Activated naive CD4-positive, alpha-beta T cell treated with anti-CD3 and anti-CD28 coated beads, Interleukin-2, amount 10 ng/mL, durations not matched to agents 7 days and 5 days (primary cell): ENCODE measurements at regions of chr22 and their contacts with region 1.

Region 1: GRCh38 chr22:41697126-41697775 is 2.1 kb upstream of the MEI1 start:
- DNase-seq: peak; percentile 95
- H3K4me3 Mint-ChIP-seq: peak overlapping the region; percentile 18
- H3K27ac Mint-ChIP-seq: peak overlapping the region; percentile 57
- H3K4me1 Mint-ChIP-seq: peaks cover 11% of the 10 kb centered on the region
- H3K27me3 Mint-ChIP-seq: peaks cover 18% of the 10 kb centered on the region

Region 2: GRCh38 chr22:41377846-41378245 is 319.4 kb before region 1 on chr22:
- CTCF ChIA-PET with region 1: no interaction called
- DNase-seq: no peak
- H3K4me3 Mint-ChIP-seq: no peak overlapping the region
- H3K27ac Mint-ChIP-seq: no peak overlapping the region
- H3K4me1 Mint-ChIP-seq: peaks cover 18% of the 10 kb centered on the region
- H3K27me3 Mint-ChIP-seq: peaks cover 27% of the 10 kb centered on the region

Region 3: GRCh38 chr22:41666661-41667258 is 30.5 kb before region 1 on chr22:
- CTCF ChIA-PET with region 1: interaction called, 17 read pairs
- DNase-seq: peak; percentile 94
- H3K4me3 Mint-ChIP-seq: peak overlapping the region; percentile 75
- H3K27ac Mint-ChIP-seq: peak overlapping the region; percentile 98
- H3K4me1 Mint-ChIP-seq: peaks cover 12% of the 10 kb centered on the region
- H3K27me3 Mint-ChIP-seq: no peaks in the 10 kb centered on the region

Region 4: DNA sequence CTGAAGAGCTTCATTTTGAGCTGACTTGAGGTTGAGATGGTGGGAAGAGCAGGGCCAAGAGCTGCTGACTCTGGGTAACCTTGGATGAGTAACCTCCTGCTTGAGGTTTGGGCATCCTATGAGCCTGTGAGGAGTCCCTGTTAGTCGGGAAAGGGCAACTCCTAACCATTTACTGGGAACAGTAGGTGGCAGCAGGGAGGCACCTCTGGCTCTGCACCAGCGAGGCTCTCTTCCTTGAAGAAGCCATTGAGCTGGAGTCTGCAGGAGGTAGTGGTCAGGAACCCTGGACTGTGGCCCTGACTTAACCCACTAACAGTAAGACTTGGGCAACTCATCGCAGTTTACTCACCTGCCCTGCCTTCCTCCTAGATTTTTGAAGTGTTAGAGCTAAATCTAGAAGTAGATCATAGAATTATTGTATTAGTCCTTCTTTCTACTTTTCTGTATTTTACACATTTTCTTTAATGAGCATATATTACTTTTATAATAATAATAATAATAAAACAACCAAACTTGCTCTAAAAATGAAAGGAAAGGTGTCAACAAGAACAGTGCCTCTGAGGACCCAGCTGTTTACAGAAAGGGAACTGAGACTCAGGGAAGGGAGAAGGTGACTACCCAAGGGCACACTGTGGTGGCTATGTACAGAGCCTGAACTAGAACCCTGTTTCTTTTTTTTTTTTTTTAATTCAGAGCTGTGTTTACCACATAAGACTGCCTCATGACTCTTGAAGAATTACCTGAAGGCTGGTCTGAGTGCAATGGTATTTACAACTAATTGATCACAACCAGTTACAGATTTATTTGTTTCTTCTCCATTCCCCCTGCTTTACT is 49.5 kb after region 1 on chr22:
- CTCF ChIA-PET with region 1: interaction called, 20 read pairs
- DNase-seq: peak; percentile 70
- H3K4me3 Mint-ChIP-seq: no peak overlapping the region
- H3K27ac Mint-ChIP-seq: no peak overlapping the region
- H3K4me1 Mint-ChIP-seq: peaks cover 2% of the 10 kb centered on the region
- H3K27me3 Mint-ChIP-seq: peaks cover 57% of the 10 kb centered on the region

Region 5: GRCh38 chr22:41800348-41801146 is 103.3 kb after region 1 on chr22 and contains the start of gene CCDC134:
- CTCF ChIA-PET with region 1: interaction called, 31 read pairs
- DNase-seq: peak; percentile 95
- H3K4me3 Mint-ChIP-seq: peak within 1 kb of the TSS; percentile 86
- H3K27ac Mint-ChIP-seq: peak within 1 kb of the TSS; percentile 97
- H3K4me1 Mint-ChIP-seq: peaks cover 48% of the 10 kb centered on the region
- H3K27me3 Mint-ChIP-seq: no peaks in the 10 kb centered on the region

Region 6: GRCh38 chr22:41857155-41857859 is 160.1 kb after region 1 on chr22:
- CTCF ChIA-PET with region 1: interaction called, 24 read pairs
- DNase-seq: peak; percentile 76
- H3K4me3 Mint-ChIP-seq: no peak overlapping the region
- H3K27ac Mint-ChIP-seq: peak overlapping the region; percentile 89
- H3K4me1 Mint-ChIP-seq: peaks cover 61% of the 10 kb centered on the region
- H3K27me3 Mint-ChIP-seq: no peaks in the 10 kb centered on the region

Region 7: DNA sequence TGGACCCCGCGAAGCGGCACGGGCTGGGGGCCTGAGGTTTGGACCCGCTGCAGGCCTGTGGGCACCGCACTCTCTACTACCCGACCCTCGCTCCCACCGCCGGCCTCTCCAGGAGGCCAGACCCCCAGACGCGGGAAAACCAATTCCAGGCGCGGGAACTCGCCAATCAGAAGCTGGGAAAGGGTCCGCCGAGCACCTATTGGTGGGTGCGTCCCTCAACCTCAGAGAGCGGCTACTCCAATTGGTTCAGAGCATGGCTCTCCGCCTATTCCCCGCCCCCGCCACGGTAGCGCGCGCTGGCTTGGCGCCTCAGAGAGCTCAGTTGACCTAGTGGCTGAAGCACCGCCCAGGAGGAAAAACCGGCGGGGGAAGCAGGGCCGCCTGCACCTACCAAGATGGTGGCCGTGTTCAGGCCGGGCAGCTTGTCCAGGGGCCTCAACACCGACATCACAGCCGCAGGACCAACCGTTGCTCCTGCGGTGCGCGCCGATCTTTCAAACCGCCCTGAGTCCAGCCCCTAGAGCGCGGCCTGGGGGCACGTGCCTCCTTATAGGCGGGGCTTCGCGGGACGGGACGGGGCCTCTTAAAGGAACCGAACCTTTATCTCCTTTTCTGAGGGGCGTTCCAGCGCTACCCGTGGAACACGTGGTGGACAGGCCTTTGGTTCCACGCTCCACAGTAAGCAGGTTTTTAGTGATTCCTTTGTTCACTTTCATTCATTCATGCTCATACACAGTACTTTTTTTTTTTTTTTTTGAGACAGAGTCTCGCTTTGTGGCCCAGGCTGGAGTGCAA is 249.6 kb after region 1 on chr22 and contains the start of gene CENPM:
- CTCF ChIA-PET with region 1: interaction called, 45 read pairs
- DNase-seq: peak; percentile 96
- H3K4me3 Mint-ChIP-seq: peak within 1 kb of the TSS; percentile 85
- H3K27ac Mint-ChIP-seq: peak within 1 kb of the TSS; percentile 92
- H3K4me1 Mint-ChIP-seq: peaks cover 54% of the 10 kb centered on the region
- H3K27me3 Mint-ChIP-seq: peaks cover 11% of the 10 kb centered on the region